ENCODE measurements at regions of chr2 and their contacts with region 1.

Region 1: GRCh38 chr2:70086838-70087701 is at the start of gene PCBP1:
- DNase-seq: peak; percentile 91
- H3K4me3 Mint-ChIP-seq: peak within 1 kb of the TSS; percentile 99
- H3K27ac Mint-ChIP-seq: peak within 1 kb of the TSS; percentile 100
- H3K4me1 Mint-ChIP-seq: peaks cover 56% of the 10 kb centered on the region
- H3K27me3 Mint-ChIP-seq: no peaks in the 10 kb centered on the region
- total RNA-seq, gene PCBP1: 426 and 427 TPM in 2 replicates

Region 2: DNA sequence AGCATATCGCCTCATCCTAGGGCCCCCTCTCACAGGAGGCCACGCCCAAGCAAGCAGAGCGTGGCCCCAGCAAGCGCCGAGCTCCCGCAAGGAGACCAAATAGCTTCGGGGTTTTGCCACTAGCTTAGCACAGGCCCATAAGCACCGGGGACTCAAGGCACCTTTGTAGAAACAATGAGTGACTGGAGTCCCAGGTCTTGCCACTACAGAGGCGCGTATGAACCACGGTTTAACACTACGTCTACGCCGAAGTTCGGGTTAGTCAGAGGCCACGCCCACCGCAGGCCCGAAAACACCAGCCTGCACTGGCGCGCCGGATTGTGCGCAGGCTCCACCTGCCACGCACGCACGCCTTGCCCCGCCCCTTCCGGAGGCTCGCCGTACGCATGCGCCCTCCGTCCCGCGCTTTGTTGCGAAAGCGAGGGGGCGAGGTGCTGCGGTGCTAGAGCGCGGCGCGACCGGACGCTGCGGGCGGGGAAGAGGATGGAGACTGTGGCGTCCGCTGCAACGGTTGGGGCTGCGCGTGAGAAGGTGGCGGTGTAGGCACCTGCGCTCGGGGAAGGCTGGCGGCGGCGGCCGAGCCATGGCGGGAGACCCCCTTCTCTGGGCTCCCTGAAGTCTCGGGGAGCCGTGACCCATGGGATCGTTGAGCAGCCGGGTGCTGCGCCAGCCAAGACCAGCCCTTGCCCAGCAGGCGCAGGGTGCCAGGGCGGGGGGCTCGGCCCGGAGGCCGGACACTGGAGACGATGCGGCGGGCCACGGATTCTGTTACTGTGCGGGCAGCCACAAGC is 257.6 kb before region 1 on chr2 and contains the start of gene GMCL1:
- intact Hi-C with region 1: loop called (anchors 2 kb)
- DNase-seq: peak; percentile 99
- H3K4me3 Mint-ChIP-seq: peak within 1 kb of the TSS; percentile 98
- H3K27ac Mint-ChIP-seq: peak within 1 kb of the TSS; percentile 95
- H3K4me1 Mint-ChIP-seq: peaks cover 59% of the 10 kb centered on the region
- H3K27me3 Mint-ChIP-seq: no peaks in the 10 kb centered on the region
- total RNA-seq, gene GMCL1: 25.6 and 32.8 TPM in 2 replicates

Region 3: GRCh38 chr2:70062268-70062667 is 24.8 kb before region 1 on chr2:
- intact Hi-C with region 1: no loop called
- DNase-seq: no peak
- H3K4me3 Mint-ChIP-seq: no peak overlapping the region
- H3K27ac Mint-ChIP-seq: no peak overlapping the region
- H3K4me1 Mint-ChIP-seq: peaks cover 26% of the 10 kb centered on the region
- H3K27me3 Mint-ChIP-seq: no peaks in the 10 kb centered on the region

Region 4: DNA sequence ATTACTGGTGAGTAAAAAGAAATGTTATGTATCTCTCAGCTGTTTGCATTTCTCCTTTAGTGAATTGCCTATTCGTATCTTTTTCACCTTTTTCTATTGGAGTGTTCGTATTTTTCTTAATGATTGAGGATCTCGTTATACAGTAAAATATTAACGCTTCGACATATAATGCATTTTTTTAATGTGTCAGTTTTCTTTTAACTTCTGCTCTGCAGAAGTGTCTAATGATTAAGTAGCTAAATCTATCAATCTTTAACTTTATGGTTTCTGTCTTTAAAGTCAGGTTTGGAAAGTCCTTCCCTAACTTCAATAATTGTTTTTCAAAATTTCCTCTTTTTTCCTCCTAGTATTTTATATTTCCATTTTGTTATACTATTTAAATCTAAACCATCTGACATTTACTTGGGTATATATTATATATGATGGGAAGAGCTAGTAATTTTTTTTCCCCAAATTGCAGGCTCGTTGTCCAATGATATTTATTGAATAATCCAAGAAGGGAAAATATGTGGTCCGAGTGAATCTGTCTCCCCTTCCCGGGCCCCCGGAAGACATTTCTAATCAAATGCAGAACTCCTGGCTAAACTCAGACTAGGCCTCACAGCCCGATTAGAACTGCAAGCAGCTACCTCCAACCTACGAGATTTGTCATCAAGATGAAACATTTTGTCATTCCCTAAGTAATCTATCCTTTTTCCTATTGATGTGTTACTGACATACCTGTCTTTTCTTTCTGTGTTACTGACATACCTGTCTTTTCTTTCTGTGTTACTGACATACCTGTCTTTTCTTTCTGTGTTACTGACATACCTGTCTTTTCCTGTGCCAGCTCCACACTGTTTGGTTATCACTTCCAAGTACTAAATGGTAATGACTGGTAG is 17.4 kb after region 1 on chr2:
- intact Hi-C with region 1: loop called (anchors 1 kb)
- DNase-seq: no peak
- H3K4me3 Mint-ChIP-seq: peak overlapping the region; percentile 79
- H3K27ac Mint-ChIP-seq: peak overlapping the region; percentile 87
- H3K4me1 Mint-ChIP-seq: peaks cover 42% of the 10 kb centered on the region
- H3K27me3 Mint-ChIP-seq: no peaks in the 10 kb centered on the region

Region 5: DNA sequence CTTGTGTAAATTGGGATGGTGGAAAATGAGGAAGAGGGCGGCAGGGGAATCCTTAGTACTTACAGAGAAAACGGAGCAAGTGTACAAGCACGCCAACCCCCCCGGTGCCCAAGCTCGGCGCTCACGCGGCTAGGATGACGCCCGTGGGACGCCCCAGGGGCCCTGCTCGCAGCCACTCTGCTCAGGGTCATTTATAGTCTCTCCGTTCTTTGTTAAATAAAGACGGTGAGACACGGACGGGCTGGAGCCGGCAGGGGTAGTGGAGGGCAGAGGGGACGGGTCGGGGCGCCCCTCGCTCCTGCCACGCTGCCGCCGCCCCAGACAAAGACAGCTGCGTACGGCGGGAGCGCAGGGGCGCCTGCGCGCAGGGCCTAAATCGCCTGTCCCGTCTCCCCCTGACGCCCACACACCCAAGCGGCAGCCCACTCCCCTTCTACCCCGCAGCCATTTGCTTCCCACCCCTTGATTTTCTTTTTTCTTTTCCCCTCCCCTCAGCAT is 38.0 kb after region 1 on chr2:
- intact Hi-C with region 1: loop called (anchors 1 kb)
- DNase-seq: peak; percentile 42
- H3K4me3 Mint-ChIP-seq: peak overlapping the region; percentile 93
- H3K27ac Mint-ChIP-seq: peak overlapping the region; percentile 99
- H3K4me1 Mint-ChIP-seq: peaks cover 78% of the 10 kb centered on the region
- H3K27me3 Mint-ChIP-seq: no peaks in the 10 kb centered on the region

Region 6: GRCh38 chr2:70132244-70133126 is 45.4 kb after region 1 on chr2:
- intact Hi-C with region 1: loop called (anchors 2 kb)
- DNase-seq: peak; percentile 37
- H3K4me3 Mint-ChIP-seq: peak overlapping the region; percentile 84
- H3K27ac Mint-ChIP-seq: peak overlapping the region; percentile 98
- H3K4me1 Mint-ChIP-seq: peaks cover 67% of the 10 kb centered on the region
- H3K27me3 Mint-ChIP-seq: no peaks in the 10 kb centered on the region

Region 7: GRCh38 chr2:70173520-70173919 is 86.5 kb after region 1 on chr2:
- intact Hi-C with region 1: no loop called
- DNase-seq: no peak
- H3K4me3 Mint-ChIP-seq: no peak overlapping the region
- H3K27ac Mint-ChIP-seq: no peak overlapping the region
- H3K4me1 Mint-ChIP-seq: no peaks in the 10 kb centered on the region
- H3K27me3 Mint-ChIP-seq: no peaks in the 10 kb centered on the region

Region 8: GRCh38 chr2:70248181-70248847 is 161.2 kb after region 1 on chr2 and contains the start of gene TIA1:
- intact Hi-C with region 1: loop called (anchors 5 kb)
- DNase-seq: peak; percentile 98
- H3K4me3 Mint-ChIP-seq: peak within 1 kb of the TSS; percentile 99
- H3K27ac Mint-ChIP-seq: peak within 1 kb of the TSS; percentile 99
- H3K4me1 Mint-ChIP-seq: peaks cover 42% of the 10 kb centered on the region
- H3K27me3 Mint-ChIP-seq: no peaks in the 10 kb centered on the region
- total RNA-seq, gene TIA1: 96.8 and 101 TPM in 2 replicates

Measured in activated T-helper 1 cell treated with anti-CD3 and anti-CD28 coated beads, Interleukin-12 subunit alpha, Interleukin-12 subunit beta, Interleukin-2, Interleukin-4 antibody, amounts not matched to agents 30 ng/mL and 10 ng/mL and 1 ng/mL, durations not matched to agents 14 hours and 24 hours and 36 hours (primary cell).